ENCODE measurements at regions of chr10 and their contacts with region 1.

Region 1: GRCh38 chr10:48802611-48803071 is 118.0 kb downstream of the WDFY4 start:
- DNase-seq: peak in 1 of 9 donors; percentile 17
- ATAC-seq: no peak
- H3K4me3 ChIP-seq: no peak overlapping the region
- H3K4me3 Mint-ChIP-seq: peak overlapping the region in 5 of 10 donors; percentile 4 to 49 (median 21)
- H3K27ac ChIP-seq: no peak overlapping the region
- H3K27ac Mint-ChIP-seq: peak overlapping the region in 7 of 9 donors; percentile 6 to 87 (median 75)
- H3K4me1 ChIP-seq: peaks cover 0 to 66% of the 10 kb centered on the region in 2 donors
- H3K4me1 Mint-ChIP-seq: peaks cover 20 to 82% (median 75%) of the 10 kb centered on the region in 7 donors
- H3K27me3 ChIP-seq: no peaks in the 10 kb centered on the region
- H3K27me3 Mint-ChIP-seq: peaks cover 0 to 6% (median 0%) of the 10 kb centered on the region in 5 donors

Region 2: GRCh38 chr10:49187950-49188761 is 385.5 kb after region 1 on chr10 and contains the start of gene TMEM273:
- CTCF ChIA-PET with region 1: no interaction called
- POLR2A ChIA-PET with region 1: no interaction called
- intact Hi-C with region 1: loop called in 1 of 2 experiments (anchors 10 kb)
- DNase-seq: peak in 1 of 9 donors; percentile 24
- ATAC-seq: peak; percentile 76
- H3K4me3 ChIP-seq: no peak within 1 kb of the TSS
- H3K4me3 Mint-ChIP-seq: peak within 1 kb of the TSS in 2 of 10 donors; percentile 51 to 77
- H3K27ac ChIP-seq: no peak within 1 kb of the TSS
- H3K27ac Mint-ChIP-seq: peak within 1 kb of the TSS in 1 of 9 donors; percentile 58
- H3K4me1 ChIP-seq: peaks cover 0 to 12% of the 10 kb centered on the region in 2 donors
- H3K4me1 Mint-ChIP-seq: peaks cover 0 to 62% (median 5%) of the 10 kb centered on the region in 7 donors
- H3K27me3 ChIP-seq: peaks cover 0 to 5% of the 10 kb centered on the region in 2 donors
- H3K27me3 Mint-ChIP-seq: peaks cover 11 to 54% (median 46%) of the 10 kb centered on the region in 5 donors
- total RNA-seq, gene TMEM273: 1.1 to 20.2 (median 1.8) TPM

Region 3: GRCh38 chr10:49538381-49539319 is 736.0 kb after region 1 on chr10 and contains the start of gene ERCC6:
- CTCF ChIA-PET with region 1: no interaction called
- POLR2A ChIA-PET with region 1: no interaction called
- intact Hi-C with region 1: loop called in 1 of 2 experiments (anchors 10 kb)
- DNase-seq: peak; percentile 89 to 95 (median 93)
- ATAC-seq: peak; percentile 97
- H3K4me3 ChIP-seq: peak within 1 kb of the TSS; percentile 81
- H3K4me3 Mint-ChIP-seq: peak within 1 kb of the TSS; percentile 89 to 98 (median 93)
- H3K27ac ChIP-seq: peak within 1 kb of the TSS; percentile 77
- H3K27ac Mint-ChIP-seq: peak within 1 kb of the TSS; percentile 89 to 98 (median 93)
- H3K4me1 ChIP-seq: peaks cover 10 to 14% of the 10 kb centered on the region in 2 donors
- H3K4me1 Mint-ChIP-seq: peaks cover 32 to 52% (median 45%) of the 10 kb centered on the region in 7 donors
- H3K27me3 ChIP-seq: no peaks in the 10 kb centered on the region
- H3K27me3 Mint-ChIP-seq: peaks cover 2 to 25% (median 16%) of the 10 kb centered on the region in 5 donors
- total RNA-seq, gene ERCC6: 23.0 to 50.7 (median 45.2) TPM